Activated naive CD4-positive, alpha-beta T cell treated with anti-CD3 and anti-CD28 coated beads for 36 hours (primary cell): ENCODE measurements at regions of chr7 and their contacts with region 1.

Region 1: DNA sequence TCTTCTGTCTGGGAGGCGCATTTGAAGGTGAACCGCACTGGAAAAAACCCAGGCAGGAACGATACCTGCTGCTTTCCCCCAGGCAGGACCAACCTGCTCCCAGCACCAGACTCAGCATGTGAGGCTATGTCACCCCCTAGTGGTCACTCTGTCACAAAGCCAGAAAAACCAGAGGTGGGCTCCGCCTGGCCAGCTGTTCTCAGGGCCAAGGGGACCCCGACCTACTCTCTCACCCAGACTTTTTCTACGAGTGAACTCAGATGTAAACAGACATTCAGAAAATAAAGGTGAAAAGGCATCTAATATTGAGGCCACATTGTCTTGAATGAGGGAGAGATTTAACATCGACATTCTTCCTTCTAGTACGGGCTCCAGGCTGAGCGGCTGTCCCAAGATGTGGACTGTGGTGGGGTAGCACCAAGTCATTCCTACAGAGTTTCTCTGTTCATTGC is 117.3 kb downstream of the PRKAG2 start:
- DNase-seq: peak; percentile 75
- H3K4me3 Mint-ChIP-seq: no peak overlapping the region
- H3K27ac Mint-ChIP-seq: no peak overlapping the region
- H3K4me1 Mint-ChIP-seq: peaks cover 22% of the 10 kb centered on the region
- H3K27me3 Mint-ChIP-seq: no peaks in the 10 kb centered on the region

Region 2: DNA sequence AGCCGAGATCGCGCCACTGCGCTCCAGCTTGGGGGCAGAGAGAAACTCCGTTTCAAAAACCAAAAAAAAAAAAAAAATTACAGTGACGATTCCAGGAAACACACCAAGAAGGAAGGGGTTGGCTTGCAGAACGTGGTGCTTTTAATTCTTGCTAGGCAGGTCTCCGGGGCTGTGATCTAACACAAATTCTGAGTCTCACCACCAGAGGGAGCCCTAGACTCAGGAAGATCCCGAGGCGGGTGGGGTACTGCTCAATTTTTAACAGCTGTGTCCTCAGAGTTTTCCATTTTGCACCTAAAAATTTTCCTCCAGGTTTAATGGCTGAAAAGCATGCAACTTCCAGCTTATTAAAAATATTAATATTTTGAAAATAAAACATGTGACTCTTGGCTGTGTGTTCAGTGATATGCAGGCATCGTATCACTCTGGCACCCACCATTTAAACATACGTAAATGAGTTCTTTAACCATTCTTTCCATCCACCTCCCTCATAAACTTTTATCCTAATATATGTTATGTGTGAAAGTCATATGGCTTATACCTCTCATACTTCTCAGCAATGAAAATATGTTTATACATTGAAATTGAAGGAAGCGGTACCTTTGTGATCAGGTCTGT is 444.5 kb before region 1 on chr7:
- CTCF ChIA-PET with region 1: no interaction called
- intact Hi-C with region 1: loop called (anchors 1 kb)
- DNase-seq: peak; percentile 87
- H3K4me3 Mint-ChIP-seq: peak overlapping the region; percentile 44
- H3K27ac Mint-ChIP-seq: no peak overlapping the region
- H3K4me1 Mint-ChIP-seq: peaks cover 9% of the 10 kb centered on the region
- H3K27me3 Mint-ChIP-seq: no peaks in the 10 kb centered on the region

Region 3: DNA sequence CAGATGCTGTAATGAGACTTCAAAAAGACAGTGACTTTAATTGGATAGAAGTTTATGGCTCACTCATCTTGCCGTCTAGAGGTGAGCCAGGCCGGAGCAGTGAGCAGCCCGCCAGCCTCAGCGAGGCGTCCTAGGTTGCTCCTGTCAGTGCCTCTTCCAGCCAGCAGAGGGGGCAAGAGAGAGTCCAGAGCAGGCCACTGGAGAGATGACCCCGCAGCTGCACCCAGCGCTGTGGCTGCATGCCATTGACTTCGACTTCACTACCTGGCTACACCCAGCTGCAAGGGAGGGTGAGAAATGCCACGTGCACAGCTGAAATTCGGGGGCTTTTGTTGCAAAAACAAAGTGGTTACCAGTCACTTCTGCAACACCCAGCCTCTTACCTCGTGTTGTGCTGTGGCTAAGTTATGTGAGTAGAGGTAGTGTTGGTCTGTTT is 391.5 kb before region 1 on chr7:
- CTCF ChIA-PET with region 1: interaction called, 13 read pairs
- intact Hi-C with region 1: loop called (anchors 1 kb)
- DNase-seq: peak; percentile 86
- H3K4me3 Mint-ChIP-seq: no peak overlapping the region
- H3K27ac Mint-ChIP-seq: no peak overlapping the region
- H3K4me1 Mint-ChIP-seq: peaks cover 7% of the 10 kb centered on the region
- H3K27me3 Mint-ChIP-seq: no peaks in the 10 kb centered on the region

Region 4: DNA sequence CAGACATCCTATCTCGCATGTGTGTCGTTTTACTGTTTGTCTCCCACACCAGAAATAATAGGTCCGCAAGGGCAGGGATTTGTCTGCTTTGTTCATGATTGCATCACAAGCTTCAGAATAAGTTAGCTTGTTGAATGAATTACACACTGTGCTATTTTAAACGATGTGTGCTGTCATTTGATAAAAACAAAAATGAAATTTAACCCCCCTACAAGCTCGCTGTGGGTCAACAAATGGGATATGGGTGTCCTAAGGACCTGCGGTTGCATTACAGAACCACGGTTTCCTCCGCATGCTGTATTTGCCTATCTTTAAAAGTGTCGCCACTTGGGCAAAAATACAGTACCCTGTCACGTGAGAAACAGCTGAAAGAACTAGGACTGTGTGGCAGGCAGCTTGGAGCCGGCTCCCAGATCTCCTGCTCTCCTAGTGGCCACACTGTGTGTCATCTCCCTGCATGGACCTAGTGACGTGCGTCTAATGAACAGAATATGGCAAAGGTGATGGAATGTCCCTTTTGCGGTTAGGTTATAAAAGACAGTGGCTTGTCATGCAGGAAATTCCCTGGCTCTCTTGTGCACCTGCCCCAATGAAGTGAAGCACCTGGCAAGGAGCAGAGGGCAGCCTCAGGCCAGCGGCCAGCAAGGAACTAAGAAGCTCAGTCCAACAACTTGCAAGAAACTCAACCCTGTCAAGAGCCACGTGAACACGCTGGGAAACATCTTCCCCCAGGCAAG is 286.8 kb before region 1 on chr7:
- CTCF ChIA-PET with region 1: no interaction called
- intact Hi-C with region 1: loop called (anchors 5 kb)
- DNase-seq: no peak
- H3K4me3 Mint-ChIP-seq: no peak overlapping the region
- H3K27ac Mint-ChIP-seq: no peak overlapping the region
- H3K4me1 Mint-ChIP-seq: peaks cover 31% of the 10 kb centered on the region
- H3K27me3 Mint-ChIP-seq: no peaks in the 10 kb centered on the region

Region 5: GRCh38 chr7:151570366-151570915 is 189.2 kb before region 1 on chr7:
- CTCF ChIA-PET with region 1: interaction called, 9 read pairs
- intact Hi-C with region 1: loop called (anchors 1 kb)
- DNase-seq: no peak
- H3K4me3 Mint-ChIP-seq: no peak overlapping the region
- H3K27ac Mint-ChIP-seq: no peak overlapping the region
- H3K4me1 Mint-ChIP-seq: no peaks in the 10 kb centered on the region
- H3K27me3 Mint-ChIP-seq: no peaks in the 10 kb centered on the region

Region 6: DNA sequence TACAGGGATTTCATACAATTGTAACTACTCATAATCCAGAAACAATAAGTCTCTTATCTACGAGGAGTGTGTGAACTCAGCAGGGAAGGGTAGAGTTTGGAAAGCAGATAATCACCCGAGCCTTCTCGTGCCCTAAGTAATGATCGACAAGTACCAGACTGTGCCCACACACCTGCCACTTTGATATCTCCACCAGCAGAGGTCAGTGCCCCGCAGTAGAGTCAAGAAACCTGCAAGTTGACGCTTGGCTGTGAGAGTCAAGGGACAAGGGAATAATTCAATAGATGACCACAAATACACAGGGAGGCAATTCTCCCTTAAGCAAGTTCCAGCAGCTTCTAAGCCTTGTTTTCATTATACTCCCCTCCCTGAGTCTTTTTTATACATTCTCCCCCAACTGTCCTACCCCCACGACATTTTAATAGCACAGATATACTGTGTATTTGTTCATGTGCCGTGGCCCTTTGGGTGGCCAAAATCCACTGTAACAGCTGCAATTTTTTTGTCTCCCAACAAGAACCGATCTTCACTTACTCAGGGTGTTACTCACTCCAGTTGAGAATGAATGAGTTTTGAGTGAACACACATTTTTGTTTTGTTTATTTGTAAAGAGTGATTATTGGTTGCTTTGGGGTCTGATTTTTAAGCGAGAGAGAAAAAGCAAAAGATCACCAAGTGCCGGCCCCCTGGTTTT is 133.0 kb before region 1 on chr7:
- CTCF ChIA-PET with region 1: interaction called, 51 read pairs
- intact Hi-C with region 1: loop called (anchors 1 kb)
- DNase-seq: peak; percentile 62
- H3K4me3 Mint-ChIP-seq: no peak overlapping the region
- H3K27ac Mint-ChIP-seq: no peak overlapping the region
- H3K4me1 Mint-ChIP-seq: peaks cover 40% of the 10 kb centered on the region
- H3K27me3 Mint-ChIP-seq: no peaks in the 10 kb centered on the region

Region 7: DNA sequence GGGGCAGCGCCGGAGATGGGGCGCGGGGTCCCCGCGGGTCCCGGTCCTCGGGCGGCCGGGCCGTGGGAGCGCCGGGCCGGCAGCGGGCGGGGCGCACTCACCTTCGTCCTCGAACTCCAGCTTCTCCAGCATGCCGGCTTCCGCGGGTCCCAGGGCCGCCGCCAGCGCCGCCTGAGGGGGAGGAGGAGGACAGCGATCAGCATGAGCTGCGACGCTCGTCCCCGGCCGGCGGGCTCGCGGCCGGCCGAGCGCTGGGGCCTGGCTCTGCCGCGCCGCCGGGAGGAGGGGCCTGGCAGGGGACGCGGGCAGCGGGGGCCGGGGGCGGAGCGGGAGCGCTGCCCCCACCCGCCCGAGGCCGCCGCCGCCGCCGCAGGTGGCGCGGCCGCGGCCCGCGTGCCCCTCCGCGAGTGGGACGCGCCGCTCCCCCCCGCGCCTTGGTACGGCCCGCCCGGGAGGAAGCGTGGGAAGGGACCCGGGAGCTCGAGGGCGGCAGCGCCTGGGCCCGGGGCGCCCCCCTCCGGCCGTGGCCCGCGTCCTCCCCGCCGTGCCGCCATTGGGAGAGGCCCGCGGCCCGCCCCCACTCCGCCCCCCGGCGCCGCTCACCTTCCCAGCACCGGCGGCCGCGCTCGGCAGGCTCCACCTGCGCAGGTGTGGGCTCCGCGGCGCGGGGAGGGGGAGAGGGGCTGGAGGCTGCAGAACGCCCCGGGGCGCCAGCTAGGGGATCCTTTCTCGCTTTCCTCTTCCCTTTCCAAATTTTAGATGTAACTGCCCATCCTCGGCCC is 127.5 kb before region 1 on chr7:
- CTCF ChIA-PET with region 1: interaction called, 51 read pairs
- intact Hi-C with region 1: loop called (anchors 1 kb)
- DNase-seq: peak; percentile 87
- H3K4me3 Mint-ChIP-seq: peak overlapping the region; percentile 95
- H3K27ac Mint-ChIP-seq: peak overlapping the region; percentile 99
- H3K4me1 Mint-ChIP-seq: peaks cover 23% of the 10 kb centered on the region
- H3K27me3 Mint-ChIP-seq: no peaks in the 10 kb centered on the region